Panc1 (cell line): ENCODE measurements at regions of chr12 and their contacts with region 1.

Region 1: DNA sequence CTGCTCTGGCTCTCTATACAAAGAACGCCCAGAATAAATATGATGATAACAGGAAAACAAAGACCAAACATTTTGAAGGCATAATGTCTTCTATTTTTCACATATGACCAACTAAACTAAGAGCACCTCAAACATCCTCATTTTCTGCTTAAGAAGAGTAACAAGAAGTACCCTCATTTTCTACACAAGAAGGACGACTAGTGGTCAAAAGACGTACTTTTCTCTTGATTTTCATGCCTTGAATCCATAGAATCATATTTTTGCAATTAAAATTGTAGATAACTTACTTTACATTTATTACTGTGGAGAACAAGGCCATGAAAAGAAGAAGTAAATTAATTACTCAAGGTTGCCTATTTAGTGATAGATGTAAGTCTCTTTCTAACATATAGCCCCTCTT is 358.6 kb downstream of the DUSP6 start:
- DNase-seq: peak; percentile 15
- ATAC-seq: no peak
- H3K4me3 ChIP-seq: no peak overlapping the region
- H3K27ac ChIP-seq: no peak overlapping the region
- H3K4me1 ChIP-seq: no peaks in the 10 kb centered on the region
- H3K27me3 ChIP-seq: no peaks in the 10 kb centered on the region
- CTCF ChIP-seq: peak; percentile 39; the same call in 1 of the 2 replicates

Region 2: DNA sequence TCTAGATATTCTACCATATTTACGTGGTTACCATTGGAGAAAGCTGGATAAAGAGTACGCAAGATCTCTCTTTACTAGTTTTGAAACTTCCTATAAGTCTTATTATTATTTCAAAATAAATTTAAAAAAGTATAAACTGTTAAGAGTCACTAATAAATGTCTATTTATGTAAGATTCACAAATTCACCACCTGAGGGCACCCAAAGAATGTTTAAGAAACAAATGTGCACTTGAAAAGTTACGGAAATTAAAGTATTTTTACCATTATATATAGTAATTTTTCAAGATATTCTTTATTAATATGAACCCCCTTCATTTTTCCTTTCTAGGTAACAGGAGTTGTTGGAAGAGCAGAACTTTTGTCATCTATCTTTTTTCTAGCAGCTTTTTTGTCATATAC is 839.7 kb before region 1 on chr12:
- CTCF ChIA-PET with region 1: no interaction called
- POLR2A ChIA-PET with region 1: no interaction called
- in situ Hi-C with region 1: no loop called
- intact Hi-C with region 1: loop called (anchors 10 kb)
- DNase-seq: no peak
- ATAC-seq: no peak
- H3K4me3 ChIP-seq: no peak overlapping the region
- H3K27ac ChIP-seq: no peak overlapping the region
- H3K4me1 ChIP-seq: no peaks in the 10 kb centered on the region
- H3K27me3 ChIP-seq: no peaks in the 10 kb centered on the region
- CTCF ChIP-seq: peak; percentile 17; the same call in 1 of the 2 replicates

Region 3: GRCh38 chr12:88638966-88639760 is 354.5 kb before region 1 on chr12:
- CTCF ChIA-PET with region 1: no interaction called
- POLR2A ChIA-PET with region 1: no interaction called
- in situ Hi-C with region 1: no loop called
- intact Hi-C with region 1: loop called (anchors 10 kb)
- DNase-seq: no peak
- ATAC-seq: no peak
- H3K4me3 ChIP-seq: no peak overlapping the region
- H3K27ac ChIP-seq: no peak overlapping the region
- H3K4me1 ChIP-seq: no peaks in the 10 kb centered on the region
- H3K27me3 ChIP-seq: no peaks in the 10 kb centered on the region
- CTCF ChIP-seq: no peak

Region 4: DNA sequence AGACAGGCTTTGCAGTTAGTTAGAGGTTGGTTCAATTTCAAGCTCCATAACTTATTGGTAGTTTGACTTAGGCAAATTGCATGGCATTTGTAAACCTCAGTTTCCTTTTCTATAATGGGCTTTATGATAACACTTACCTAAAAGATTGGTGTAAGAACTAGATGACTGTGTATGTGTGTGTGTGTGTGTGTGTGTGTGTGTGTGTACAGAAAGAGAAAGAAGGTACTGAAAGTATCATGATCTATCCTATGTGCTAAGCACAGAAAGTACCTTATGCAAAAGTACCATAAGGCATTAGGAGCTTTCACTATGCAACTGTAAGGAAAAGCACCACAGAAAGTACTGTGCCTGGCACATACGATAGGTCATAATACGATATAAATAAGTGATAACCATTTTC is 109.1 kb before region 1 on chr12:
- CTCF ChIA-PET with region 1: no interaction called
- POLR2A ChIA-PET with region 1: no interaction called
- in situ Hi-C with region 1: no loop called
- intact Hi-C with region 1: no loop called
- DNase-seq: no peak
- ATAC-seq: no peak
- H3K4me3 ChIP-seq: no peak overlapping the region
- H3K27ac ChIP-seq: no peak overlapping the region
- H3K4me1 ChIP-seq: no peaks in the 10 kb centered on the region
- H3K27me3 ChIP-seq: no peaks in the 10 kb centered on the region
- CTCF ChIP-seq: no peak

Region 5: GRCh38 chr12:88982694-88983093 is 11.0 kb before region 1 on chr12:
- CTCF ChIA-PET with region 1: no interaction called
- POLR2A ChIA-PET with region 1: no interaction called
- in situ Hi-C with region 1: no loop called
- intact Hi-C with region 1: no loop called
- DNase-seq: no peak
- ATAC-seq: no peak
- H3K4me3 ChIP-seq: no peak overlapping the region
- H3K27ac ChIP-seq: no peak overlapping the region
- H3K4me1 ChIP-seq: no peaks in the 10 kb centered on the region
- H3K27me3 ChIP-seq: no peaks in the 10 kb centered on the region
- CTCF ChIP-seq: no peak